MCF 10A (cell line): ENCODE measurements at regions of chr17 and their contacts with region 1.

Region 1: DNA sequence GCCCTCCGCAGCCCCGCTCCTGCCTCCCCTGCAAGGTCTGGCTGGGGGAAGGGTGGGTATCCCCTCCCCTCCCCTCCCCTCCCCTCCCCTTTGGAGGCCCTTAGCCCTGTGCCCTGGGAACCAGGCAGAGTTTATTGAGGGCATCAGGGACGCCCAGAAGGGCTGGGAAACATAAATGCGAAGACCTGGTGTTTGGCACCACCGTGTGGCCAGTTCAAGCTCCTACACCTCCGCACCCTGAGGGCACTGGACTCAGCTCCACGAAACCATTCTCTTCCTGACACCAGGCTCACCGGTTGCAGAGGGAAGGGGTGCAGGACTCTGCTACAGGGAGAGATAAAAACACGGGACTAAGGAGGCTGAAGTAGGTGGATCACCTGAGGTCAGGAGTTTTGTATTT is 1.0 kb upstream of the AIPL1 start:
- DNase-seq: peak; percentile 75
- H3K4me3 Mint-ChIP-seq: no peak overlapping the region
- H3K27ac Mint-ChIP-seq: no peak overlapping the region
- H3K4me1 Mint-ChIP-seq: peaks cover 6% of the 10 kb centered on the region
- H3K27me3 Mint-ChIP-seq: peaks cover 12% of the 10 kb centered on the region
- CTCF ChIP-seq: peak; percentile 70

Region 2: GRCh38 chr17:4903051-4903818 is 1532.7 kb before region 1 on chr17 and contains the start of gene CHRNE:
- CTCF ChIA-PET with region 1: no interaction called
- POLR2A ChIA-PET with region 1: no interaction called
- intact Hi-C with region 1: loop called (anchors 10 kb)
- DNase-seq: peak; percentile 87
- H3K4me3 Mint-ChIP-seq: peak within 1 kb of the TSS; percentile 13
- H3K27ac Mint-ChIP-seq: peak within 1 kb of the TSS; percentile 71
- H3K4me1 Mint-ChIP-seq: peaks cover 17% of the 10 kb centered on the region
- H3K27me3 Mint-ChIP-seq: no peaks in the 10 kb centered on the region
- CTCF ChIP-seq: peak; percentile 66
- total RNA-seq, gene CHRNE: not detected in 2 replicates

Region 3: DNA sequence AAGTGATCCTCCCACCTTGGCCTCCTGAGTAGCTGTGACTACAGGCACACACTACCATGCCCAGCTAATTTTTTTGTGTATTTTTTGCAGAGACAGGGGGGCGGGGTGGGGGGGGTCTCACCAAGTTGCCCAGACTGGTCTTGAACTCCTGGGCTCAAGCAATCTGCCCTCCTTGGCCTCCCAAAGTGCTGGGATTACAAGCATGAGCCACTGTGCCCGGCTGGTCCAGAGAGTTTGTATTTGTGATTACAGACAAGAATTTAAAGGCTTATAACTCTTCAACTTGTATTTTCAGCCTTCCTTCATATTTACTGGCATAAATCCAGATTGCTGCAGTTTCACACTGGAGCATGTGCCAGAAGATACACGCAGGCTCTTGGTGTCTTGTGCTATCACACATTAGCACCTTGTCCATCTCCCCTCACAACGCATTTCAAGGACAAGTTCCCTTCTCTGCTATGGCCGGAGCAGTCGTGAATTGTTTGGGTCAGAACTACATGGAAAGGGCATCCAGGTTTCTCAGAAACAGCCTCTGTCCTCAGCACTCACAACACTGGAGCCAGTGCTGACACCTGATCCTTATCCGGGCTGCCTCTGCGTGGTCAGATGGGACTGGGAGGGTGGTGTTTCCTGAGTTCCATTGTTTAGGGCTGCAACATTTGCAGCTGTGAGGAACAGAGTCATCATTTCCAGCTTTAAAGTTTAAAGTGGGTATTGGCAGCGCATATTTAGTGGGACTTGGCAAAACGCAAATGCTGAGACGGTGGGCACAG is 337.7 kb before region 1 on chr17:
- CTCF ChIA-PET with region 1: no interaction called
- POLR2A ChIA-PET with region 1: no interaction called
- intact Hi-C with region 1: no loop called
- DNase-seq: no peak
- H3K4me3 Mint-ChIP-seq: no peak overlapping the region
- H3K27ac Mint-ChIP-seq: no peak overlapping the region
- H3K4me1 Mint-ChIP-seq: no peaks in the 10 kb centered on the region
- H3K27me3 Mint-ChIP-seq: peaks cover 96% of the 10 kb centered on the region
- CTCF ChIP-seq: no peak

Region 4: GRCh38 chr17:6421700-6422604 is 14.0 kb before region 1 on chr17:
- CTCF ChIA-PET with region 1: interaction called, 15 read pairs
- POLR2A ChIA-PET with region 1: interaction called, 5 read pairs
- intact Hi-C with region 1: no loop called
- DNase-seq: peak; percentile 83
- H3K4me3 Mint-ChIP-seq: no peak overlapping the region
- H3K27ac Mint-ChIP-seq: no peak overlapping the region
- H3K4me1 Mint-ChIP-seq: no peaks in the 10 kb centered on the region
- H3K27me3 Mint-ChIP-seq: no peaks in the 10 kb centered on the region
- CTCF ChIP-seq: peak; percentile 95

Region 5: DNA sequence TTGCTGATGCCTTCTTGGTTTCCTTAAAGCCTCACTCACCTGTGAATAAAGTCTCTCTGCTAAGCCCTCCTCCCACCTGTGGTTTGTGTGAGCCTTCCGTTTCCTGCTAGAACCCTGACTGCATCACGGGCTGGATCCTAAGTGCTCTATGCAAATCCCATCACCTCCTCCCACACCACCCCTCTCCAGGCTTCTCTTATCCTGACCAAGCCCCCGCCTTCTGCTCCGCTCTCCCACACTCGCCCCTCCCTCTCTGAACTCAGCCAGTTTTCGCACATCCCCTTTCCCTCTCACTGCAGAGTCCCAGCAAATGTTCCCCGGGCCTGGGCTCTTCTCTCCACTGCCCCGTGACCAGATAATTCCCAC is 60.1 kb after region 1 on chr17:
- CTCF ChIA-PET with region 1: no interaction called
- POLR2A ChIA-PET with region 1: no interaction called
- intact Hi-C with region 1: no loop called
- DNase-seq: no peak
- H3K4me3 Mint-ChIP-seq: no peak overlapping the region
- H3K27ac Mint-ChIP-seq: no peak overlapping the region
- H3K4me1 Mint-ChIP-seq: no peaks in the 10 kb centered on the region
- H3K27me3 Mint-ChIP-seq: no peaks in the 10 kb centered on the region
- CTCF ChIP-seq: no peak

Region 6: DNA sequence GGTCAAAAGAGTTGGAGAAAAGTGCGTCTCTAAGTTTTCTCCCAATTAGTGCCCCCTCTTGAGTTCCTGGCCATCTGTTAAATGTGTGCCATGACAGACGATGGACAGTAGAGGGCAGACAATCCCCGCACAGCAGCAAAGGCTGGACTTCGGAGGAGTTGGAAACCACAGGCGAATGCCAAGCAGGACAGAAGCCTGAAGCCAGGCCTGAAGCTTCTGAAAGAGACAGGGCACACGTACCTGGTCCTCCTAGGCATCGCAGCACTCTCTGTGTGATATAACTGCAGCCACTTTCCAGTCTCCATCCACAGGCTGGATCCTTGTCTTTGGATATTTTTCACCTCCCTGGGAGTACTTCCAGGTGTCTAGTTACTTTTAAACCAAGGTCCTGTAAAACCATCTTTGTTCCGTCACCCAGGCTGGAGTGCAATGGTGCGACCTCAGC is 230.1 kb after region 1 on chr17:
- CTCF ChIA-PET with region 1: no interaction called
- POLR2A ChIA-PET with region 1: no interaction called
- intact Hi-C with region 1: no loop called
- DNase-seq: peak; percentile 86
- H3K4me3 Mint-ChIP-seq: no peak overlapping the region
- H3K27ac Mint-ChIP-seq: no peak overlapping the region
- H3K4me1 Mint-ChIP-seq: peaks cover 30% of the 10 kb centered on the region
- H3K27me3 Mint-ChIP-seq: peaks cover 5% of the 10 kb centered on the region
- CTCF ChIP-seq: peak; percentile 93